ENCODE measurements at regions of chr19 and their contacts with region 1.

Region 1: GRCh38 chr19:24086974-24087595 is at the start of gene ZNF254:
- DNase-seq: peak; percentile 80 to 95
- H3K4me3 ChIP-seq: peak within 1 kb of the TSS; percentile 59 to 73
- H3K27ac ChIP-seq: peak within 1 kb of the TSS; percentile 68 to 79
- H3K4me1 ChIP-seq: peaks cover 0 to 5% of the 10 kb centered on the region in 2 donors
- H3K27me3 ChIP-seq: no peaks in the 10 kb centered on the region
- CTCF ChIP-seq: no peak
- total RNA-seq, gene ZNF254: 6.0 TPM

Region 2: GRCh38 chr19:24033301-24033962 is 53.7 kb before region 1 on chr19:
- intact Hi-C with region 1: loop called (anchors 2 kb)
- DNase-seq: peak; percentile 67 to 93
- H3K4me3 ChIP-seq: peak overlapping the region; percentile 88 to 90
- H3K27ac ChIP-seq: peak overlapping the region; percentile 93 to 96
- H3K4me1 ChIP-seq: peaks cover 4 to 10% of the 10 kb centered on the region in 2 donors
- H3K27me3 ChIP-seq: no peaks in the 10 kb centered on the region
- CTCF ChIP-seq: no peak

Measured in ascending aorta (tissue), 2 donors.